ENCODE measurements at regions of chr1 and their contacts with region 1.

Region 1: GRCh38 chr1:151146412-151147140 is at the start of gene SEMA6C:
- DNase-seq: peak; percentile 86
- ATAC-seq: peak; percentile 100
- H3K4me3 ChIP-seq: peak within 1 kb of the TSS; percentile 59 to 86 (median 84)
- H3K4me3 Mint-ChIP-seq: peak within 1 kb of the TSS; percentile 94
- H3K27ac ChIP-seq: peak within 1 kb of the TSS in 1 of 2 donors; percentile 43
- H3K27ac Mint-ChIP-seq: peak within 1 kb of the TSS; percentile 20
- H3K4me1 ChIP-seq: peaks cover 15 to 19% of the 10 kb centered on the region in 2 donors
- H3K4me1 Mint-ChIP-seq: peaks cover 23% of the 10 kb centered on the region
- H3K27me3 ChIP-seq: peaks cover 0 to 20% (median 8%) of the 10 kb centered on the region in 4 experiments
- H3K27me3 Mint-ChIP-seq: peaks cover 9% of the 10 kb centered on the region
- CTCF ChIP-seq: no peak
- total RNA-seq, gene SEMA6C: 0.86 and 1.5 TPM in 2 replicates

Region 2: GRCh38 chr1:151118021-151118420 is 28.6 kb before region 1 on chr1:
- CTCF ChIA-PET with region 1: no interaction called
- POLR2A ChIA-PET with region 1: no interaction called
- intact Hi-C with region 1: no loop called
- DNase-seq: no peak
- ATAC-seq: no peak
- H3K4me3 ChIP-seq: no peak overlapping the region
- H3K4me3 Mint-ChIP-seq: no peak overlapping the region
- H3K27ac ChIP-seq: no peak overlapping the region
- H3K27ac Mint-ChIP-seq: no peak overlapping the region
- H3K4me1 ChIP-seq: no peaks in the 10 kb centered on the region
- H3K4me1 Mint-ChIP-seq: no peaks in the 10 kb centered on the region
- H3K27me3 ChIP-seq: no peaks in the 10 kb centered on the region
- H3K27me3 Mint-ChIP-seq: no peaks in the 10 kb centered on the region
- CTCF ChIP-seq: no peak

Region 3: DNA sequence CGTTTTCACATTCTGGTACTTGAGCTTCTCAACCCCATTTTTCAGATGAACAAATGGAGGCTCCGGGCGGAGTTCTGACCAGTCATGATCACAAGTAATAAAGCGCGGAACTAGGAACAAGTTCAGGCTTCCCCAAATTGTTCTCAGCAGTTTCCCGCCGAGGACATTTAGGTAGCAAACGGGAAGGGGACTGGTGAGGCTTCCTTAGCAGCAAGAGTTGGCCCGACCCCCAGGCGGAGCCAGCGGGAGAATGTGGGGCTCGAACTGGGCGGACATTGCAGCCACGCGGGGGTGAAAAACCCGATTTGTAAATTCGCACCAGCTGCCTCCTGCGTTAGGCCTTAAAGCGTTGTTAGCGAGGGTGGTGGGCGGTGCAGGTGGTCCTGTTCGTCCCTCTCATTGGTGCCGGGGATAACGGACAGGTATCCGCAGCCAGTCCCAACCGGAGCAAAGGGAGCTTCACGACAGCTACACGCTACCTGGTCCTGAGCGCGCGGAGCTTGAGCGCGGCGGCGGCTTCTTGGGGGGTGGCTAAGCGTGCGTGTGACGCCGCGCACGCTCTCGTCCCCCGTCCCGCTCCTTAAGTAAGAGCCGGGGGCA is 15.5 kb before region 1 on chr1:
- CTCF ChIA-PET with region 1: interaction called, 3 read pairs
- POLR2A ChIA-PET with region 1: interaction called, 10 read pairs
- intact Hi-C with region 1: loop called (anchors 1 kb)
- DNase-seq: peak; percentile 89
- ATAC-seq: peak; percentile 100
- H3K4me3 ChIP-seq: peak overlapping the region in 4 of 5 experiments; percentile 42 to 58 (median 51)
- H3K4me3 Mint-ChIP-seq: peak overlapping the region; percentile 89
- H3K27ac ChIP-seq: peak overlapping the region; percentile 46 to 53
- H3K27ac Mint-ChIP-seq: peak overlapping the region; percentile 92
- H3K4me1 ChIP-seq: peaks cover 6 to 15% of the 10 kb centered on the region in 2 donors
- H3K4me1 Mint-ChIP-seq: peaks cover 14% of the 10 kb centered on the region
- H3K27me3 ChIP-seq: peaks cover 0 to 4% (median 0%) of the 10 kb centered on the region in 4 experiments
- H3K27me3 Mint-ChIP-seq: no peaks in the 10 kb centered on the region
- CTCF ChIP-seq: no peak

Measured in B cell (primary cell).